ENCODE measurements at regions of chr18 and their contacts with region 1.

Region 1: GRCh38 chr18:70998490-70998889 is 709.6 kb downstream of the SOCS6 start:
- DNase-seq: no peak
- ATAC-seq: no peak
- H3K4me3 ChIP-seq: no peak overlapping the region
- H3K27ac ChIP-seq: no peak overlapping the region
- H3K4me1 ChIP-seq: no peaks in the 10 kb centered on the region
- H3K27me3 ChIP-seq: no peaks in the 10 kb centered on the region
- CTCF ChIP-seq: no peak
- POLR2A ChIP-seq: no peak

Region 2: GRCh38 chr18:71079606-71080005 is 81.1 kb after region 1 on chr18:
- in situ Hi-C with region 1: loop called in 1 of 4 experiments (anchors 25 kb)
- intact Hi-C with region 1: no loop called
- DNase-seq: no peak
- ATAC-seq: no peak
- H3K4me3 ChIP-seq: no peak overlapping the region
- H3K27ac ChIP-seq: no peak overlapping the region
- H3K4me1 ChIP-seq: no peaks in the 10 kb centered on the region
- H3K27me3 ChIP-seq: no peaks in the 10 kb centered on the region
- CTCF ChIP-seq: no peak
- POLR2A ChIP-seq: no peak

Measured in gastrocnemius medialis (tissue), 4 donors.